CD8-positive, alpha-beta T cell (primary cell): ENCODE measurements at regions of chr14 and their contacts with region 1.

Region 1: GRCh38 chr14:95683793-95684192 is 2.4 kb upstream of the TCL1B start:
- DNase-seq: peak in 4 of 9 experiments; percentile 15 to 50 (median 28)
- ATAC-seq: no peak
- H3K4me3 ChIP-seq: no peak overlapping the region
- H3K4me3 Mint-ChIP-seq: no peak overlapping the region
- H3K27ac ChIP-seq: no peak overlapping the region
- H3K27ac Mint-ChIP-seq: no peak overlapping the region
- H3K4me1 ChIP-seq: no peaks in the 10 kb centered on the region
- H3K4me1 Mint-ChIP-seq: no peaks in the 10 kb centered on the region
- H3K27me3 ChIP-seq: no peaks in the 10 kb centered on the region
- H3K27me3 Mint-ChIP-seq: peaks cover 16% of the 10 kb centered on the region
- CTCF ChIP-seq: peak; percentile 21

Region 2: DNA sequence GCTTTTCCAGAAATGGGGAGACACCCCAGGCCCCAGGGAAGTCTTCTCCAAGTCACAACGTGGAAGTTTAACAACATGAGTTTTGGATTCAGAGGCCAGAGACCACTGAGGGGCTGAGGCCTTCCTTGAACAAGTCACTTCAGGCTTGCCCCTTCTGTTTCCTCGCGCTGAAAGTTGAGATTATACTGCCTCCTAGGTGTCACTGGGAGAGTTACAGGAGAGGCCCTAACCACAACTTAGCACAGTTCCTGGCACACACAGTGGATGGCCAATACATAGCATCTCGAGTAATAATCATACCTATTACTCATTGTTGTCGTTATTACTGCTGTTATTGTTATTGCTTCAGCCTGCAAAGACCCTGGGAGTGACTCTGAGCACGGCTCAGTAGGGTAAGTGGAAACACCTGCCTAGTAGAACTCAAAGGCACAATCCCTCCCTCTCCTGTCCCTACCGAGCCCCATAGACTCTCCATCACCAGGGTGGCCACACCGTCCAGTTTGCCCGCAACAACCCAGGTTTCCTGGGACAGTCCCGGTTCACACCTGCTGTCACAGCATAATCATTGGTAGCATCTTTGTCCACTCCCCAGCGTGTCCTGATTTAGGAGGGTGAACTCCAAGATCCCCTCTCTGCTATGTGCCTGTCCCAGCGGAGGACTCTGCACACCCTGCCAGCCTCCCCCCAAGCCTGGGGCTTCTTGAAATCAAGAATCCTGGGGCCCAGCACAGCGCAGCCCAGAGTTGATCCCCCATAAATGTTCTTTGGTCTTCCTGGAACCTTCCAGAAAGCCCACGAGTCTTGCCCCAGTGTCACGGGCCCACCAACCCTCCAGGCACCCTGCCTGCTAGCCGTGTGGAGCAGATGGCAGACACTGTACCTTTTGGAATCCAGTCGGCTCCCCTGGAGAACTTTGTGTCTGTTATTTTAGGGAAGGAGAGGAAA is 252.3 kb before region 1 on chr14:
- CTCF ChIA-PET with region 1: no interaction called
- POLR2A ChIA-PET with region 1: no interaction called
- intact Hi-C with region 1: loop called in 1 of 2 experiments (anchors 5 kb)
- DNase-seq: peak in 1 of 9 experiments; percentile 20
- ATAC-seq: no peak
- H3K4me3 ChIP-seq: no peak overlapping the region
- H3K4me3 Mint-ChIP-seq: no peak overlapping the region
- H3K27ac ChIP-seq: no peak overlapping the region
- H3K27ac Mint-ChIP-seq: peak overlapping the region; percentile 37
- H3K4me1 ChIP-seq: no peaks in the 10 kb centered on the region
- H3K4me1 Mint-ChIP-seq: peaks cover 3% of the 10 kb centered on the region
- H3K27me3 ChIP-seq: no peaks in the 10 kb centered on the region
- H3K27me3 Mint-ChIP-seq: no peaks in the 10 kb centered on the region
- CTCF ChIP-seq: peak; percentile 12

Region 3: GRCh38 chr14:95561001-95561412 is 122.8 kb before region 1 on chr14:
- CTCF ChIA-PET with region 1: interaction called, 5 read pairs
- POLR2A ChIA-PET with region 1: no interaction called
- intact Hi-C with region 1: loop called in 1 of 2 experiments (anchors 5 kb)
- DNase-seq: peak; percentile 62 to 88 (median 84)
- ATAC-seq: peak; percentile 88
- H3K4me3 ChIP-seq: no peak overlapping the region
- H3K4me3 Mint-ChIP-seq: no peak overlapping the region
- H3K27ac ChIP-seq: no peak overlapping the region
- H3K27ac Mint-ChIP-seq: no peak overlapping the region
- H3K4me1 ChIP-seq: no peaks in the 10 kb centered on the region
- H3K4me1 Mint-ChIP-seq: peaks cover 4% of the 10 kb centered on the region
- H3K27me3 ChIP-seq: no peaks in the 10 kb centered on the region
- H3K27me3 Mint-ChIP-seq: peaks cover 5% of the 10 kb centered on the region
- CTCF ChIP-seq: peak; percentile 86

Region 4: GRCh38 chr14:95784137-95784536 is 100.3 kb after region 1 on chr14:
- CTCF ChIA-PET with region 1: no interaction called
- POLR2A ChIA-PET with region 1: no interaction called
- intact Hi-C with region 1: no loop called
- DNase-seq: peak in 1 of 9 experiments; percentile 15
- ATAC-seq: no peak
- H3K4me3 ChIP-seq: no peak overlapping the region
- H3K4me3 Mint-ChIP-seq: no peak overlapping the region
- H3K27ac ChIP-seq: no peak overlapping the region
- H3K27ac Mint-ChIP-seq: no peak overlapping the region
- H3K4me1 ChIP-seq: no peaks in the 10 kb centered on the region
- H3K4me1 Mint-ChIP-seq: no peaks in the 10 kb centered on the region
- H3K27me3 ChIP-seq: no peaks in the 10 kb centered on the region
- H3K27me3 Mint-ChIP-seq: peaks cover 12% of the 10 kb centered on the region
- CTCF ChIP-seq: no peak